CD14-positive monocyte (primary cell): ENCODE measurements at regions of chr19 and their contacts with region 1.

Region 1: GRCh38 chr19:17859533-17860330 is at the start of gene RPL18A:
- DNase-seq: peak; percentile 99 to 100 (median 99)
- H3K4me3 ChIP-seq: peak within 1 kb of the TSS; percentile 93 to 99 (median 98)
- H3K4me3 Mint-ChIP-seq: peak within 1 kb of the TSS; percentile 97 to 99
- H3K27ac ChIP-seq: peak within 1 kb of the TSS; percentile 38 to 80
- H3K27ac Mint-ChIP-seq: peak within 1 kb of the TSS; percentile 69 to 93 (median 89)
- H3K4me1 ChIP-seq: peaks cover 17 to 21% of the 10 kb centered on the region in 2 donors
- H3K4me1 Mint-ChIP-seq: peaks cover 28% of the 10 kb centered on the region
- H3K27me3 ChIP-seq: no peaks in the 10 kb centered on the region
- H3K27me3 Mint-ChIP-seq: peaks cover 0 to 7% (median 2%) of the 10 kb centered on the region in 3 donors
- CTCF ChIP-seq: peak; percentile 76
- polyA plus RNA-seq, gene RPL18A: 1,189 to 1,285 (median 1,268) TPM

Region 2: DNA sequence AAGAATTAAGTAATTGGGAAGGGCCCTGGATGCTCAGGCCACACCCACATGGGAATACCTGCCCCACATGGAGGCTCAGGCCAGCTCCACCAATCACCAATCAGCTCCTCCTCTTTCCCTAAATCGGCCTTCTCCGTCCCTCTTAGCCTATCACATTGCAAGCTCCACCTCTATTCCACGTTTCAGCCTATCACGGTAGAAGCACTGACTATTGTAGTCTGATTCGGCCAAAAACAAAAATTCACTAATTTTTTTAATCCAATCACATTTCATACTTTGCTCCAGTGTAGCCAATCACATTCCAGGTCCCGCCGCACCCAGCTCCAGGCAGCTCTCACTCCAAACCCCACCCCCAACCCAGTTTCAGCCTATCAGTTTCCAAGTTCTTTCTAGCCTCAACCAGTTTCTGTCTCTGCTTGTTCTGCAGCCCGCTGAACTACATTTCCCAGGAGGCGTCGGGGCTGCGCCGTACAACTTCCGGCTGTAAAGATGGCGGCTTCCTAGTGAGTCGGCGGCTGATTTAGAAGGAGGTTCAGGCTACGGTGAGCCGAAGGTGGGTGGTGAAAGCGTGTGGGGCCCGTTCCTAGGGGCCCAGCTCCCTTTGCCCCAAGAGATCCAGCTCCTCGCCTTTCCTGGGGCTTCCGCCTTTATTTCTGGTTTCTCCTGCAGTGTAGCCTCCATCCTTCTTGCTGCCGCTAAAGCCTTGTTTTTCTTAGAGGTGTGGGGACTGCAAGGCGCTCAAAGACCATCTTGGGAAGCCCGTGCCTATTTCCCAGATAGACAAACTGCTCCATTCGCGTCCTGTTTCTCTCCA is 592.5 kb before region 1 on chr19 and contains the start of gene BABAM1:
- intact Hi-C with region 1: loop called in 1 of 2 experiments (anchors 10 kb)
- DNase-seq: peak; percentile 97 to 99 (median 98)
- H3K4me3 ChIP-seq: peak within 1 kb of the TSS; percentile 89 to 98 (median 97)
- H3K4me3 Mint-ChIP-seq: peak within 1 kb of the TSS; percentile 87 to 90
- H3K27ac ChIP-seq: peak within 1 kb of the TSS; percentile 64 to 86
- H3K27ac Mint-ChIP-seq: peak within 1 kb of the TSS; percentile 82 to 93 (median 88)
- H3K4me1 ChIP-seq: peaks cover 16 to 17% of the 10 kb centered on the region in 2 donors
- H3K4me1 Mint-ChIP-seq: peaks cover 22% of the 10 kb centered on the region
- H3K27me3 ChIP-seq: no peaks in the 10 kb centered on the region
- H3K27me3 Mint-ChIP-seq: peaks cover 0 to 5% (median 2%) of the 10 kb centered on the region in 3 donors
- CTCF ChIP-seq: no peak
- polyA plus RNA-seq, gene BABAM1: 76.9 to 106 (median 90.3) TPM

Region 3: GRCh38 chr19:17450264-17451075 is 409.3 kb before region 1 on chr19:
- intact Hi-C with region 1: loop called in 1 of 2 experiments (anchors 5 kb)
- DNase-seq: peak in 1 of 3 donors; percentile 28
- H3K4me3 ChIP-seq: peak overlapping the region in 1 of 3 experiments; percentile 14
- H3K4me3 Mint-ChIP-seq: peak overlapping the region in 1 of 2 donors; percentile 39
- H3K27ac ChIP-seq: no peak overlapping the region
- H3K27ac Mint-ChIP-seq: peak overlapping the region in 2 of 7 donors; percentile 5 to 11
- H3K4me1 ChIP-seq: peaks cover 20 to 25% of the 10 kb centered on the region in 2 donors
- H3K4me1 Mint-ChIP-seq: peaks cover 25% of the 10 kb centered on the region
- H3K27me3 ChIP-seq: peaks cover 16 to 48% of the 10 kb centered on the region in 2 donors
- H3K27me3 Mint-ChIP-seq: peaks cover 40 to 51% (median 47%) of the 10 kb centered on the region in 3 donors
- CTCF ChIP-seq: no peak

Region 4: GRCh38 chr19:17703824-17704463 is 155.8 kb before region 1 on chr19:
- intact Hi-C with region 1: loop called (anchors 1 to 5 kb)
- DNase-seq: peak; percentile 50 to 72 (median 68)
- H3K4me3 ChIP-seq: no peak overlapping the region
- H3K4me3 Mint-ChIP-seq: no peak overlapping the region
- H3K27ac ChIP-seq: no peak overlapping the region
- H3K27ac Mint-ChIP-seq: no peak overlapping the region
- H3K4me1 ChIP-seq: no peaks in the 10 kb centered on the region
- H3K4me1 Mint-ChIP-seq: peaks cover 8% of the 10 kb centered on the region
- H3K27me3 ChIP-seq: no peaks in the 10 kb centered on the region
- H3K27me3 Mint-ChIP-seq: peaks cover 8 to 16% (median 11%) of the 10 kb centered on the region in 3 donors
- CTCF ChIP-seq: peak; percentile 95

Region 5: GRCh38 chr19:17775245-17775916 is 84.4 kb before region 1 on chr19:
- intact Hi-C with region 1: loop called in 1 of 2 experiments (anchors 2 kb)
- DNase-seq: peak in 1 of 3 donors; percentile 40
- H3K4me3 ChIP-seq: no peak overlapping the region
- H3K4me3 Mint-ChIP-seq: no peak overlapping the region
- H3K27ac ChIP-seq: no peak overlapping the region
- H3K27ac Mint-ChIP-seq: peak overlapping the region in 3 of 7 donors; percentile 15 to 54 (median 52)
- H3K4me1 ChIP-seq: peaks cover 14 to 23% of the 10 kb centered on the region in 2 donors
- H3K4me1 Mint-ChIP-seq: peaks cover 23% of the 10 kb centered on the region
- H3K27me3 ChIP-seq: no peaks in the 10 kb centered on the region
- H3K27me3 Mint-ChIP-seq: peaks cover 0 to 2% (median 0%) of the 10 kb centered on the region in 3 donors
- CTCF ChIP-seq: peak; percentile 76

Region 6: DNA sequence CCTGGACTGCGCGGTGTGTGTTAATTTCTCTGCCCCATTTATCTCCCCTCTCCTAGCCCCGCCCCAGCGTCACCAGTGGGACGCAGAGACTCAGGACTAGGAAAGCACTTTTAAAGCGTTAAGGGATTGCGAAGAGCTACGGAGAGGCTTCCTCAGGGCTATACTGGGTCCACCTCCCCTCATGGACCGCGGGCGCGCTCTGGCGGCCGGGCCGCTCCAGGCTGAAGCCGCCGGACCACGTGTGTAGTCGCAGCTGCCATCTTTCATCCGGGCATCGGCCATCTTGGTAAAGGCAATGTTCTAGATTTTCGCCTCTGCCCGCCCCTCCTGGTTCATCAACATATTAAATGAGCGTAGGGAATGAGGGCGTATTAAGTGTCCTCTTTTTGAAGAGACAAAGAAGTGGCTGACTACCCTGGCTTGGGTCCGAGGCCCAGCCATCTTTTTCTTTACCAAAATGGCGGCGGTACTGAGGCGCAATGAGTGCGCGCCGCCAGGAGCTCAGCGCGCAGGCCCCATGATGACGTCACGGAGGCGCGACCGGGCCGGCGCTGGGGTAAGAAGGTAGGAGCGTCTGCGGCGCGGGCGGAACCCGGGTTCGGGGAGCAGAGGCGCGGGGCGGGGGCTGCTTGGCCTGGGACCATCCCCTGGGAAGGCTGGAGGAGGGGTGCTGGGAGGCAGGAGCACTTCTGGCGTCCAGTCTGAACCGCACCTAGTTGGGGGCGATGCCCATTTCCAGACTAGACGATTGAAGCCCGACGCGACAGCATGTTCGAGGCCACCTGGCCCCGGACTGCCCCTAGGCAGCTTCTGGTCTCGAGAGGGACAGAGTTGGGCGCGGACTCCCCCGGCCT is 73.0 kb after region 1 on chr19 and contains the start of gene CCDC124:
- intact Hi-C with region 1: loop called (anchors 1 to 2 kb)
- DNase-seq: peak; percentile 91 to 93 (median 92)
- H3K4me3 ChIP-seq: peak within 1 kb of the TSS; percentile 49 to 78 (median 72)
- H3K4me3 Mint-ChIP-seq: peak within 1 kb of the TSS; percentile 82 to 95
- H3K27ac ChIP-seq: peak within 1 kb of the TSS; percentile 57 to 96
- H3K27ac Mint-ChIP-seq: peak within 1 kb of the TSS; percentile 92 to 99 (median 97)
- H3K4me1 ChIP-seq: peaks cover 15 to 21% of the 10 kb centered on the region in 2 donors
- H3K4me1 Mint-ChIP-seq: peaks cover 20% of the 10 kb centered on the region
- H3K27me3 ChIP-seq: peaks cover 0 to 6% of the 10 kb centered on the region in 2 donors
- H3K27me3 Mint-ChIP-seq: peaks cover 8 to 11% (median 10%) of the 10 kb centered on the region in 3 donors
- CTCF ChIP-seq: peak; percentile 82
- polyA plus RNA-seq, gene CCDC124: 29.7 to 66.3 (median 29.7) TPM

Region 7: DNA sequence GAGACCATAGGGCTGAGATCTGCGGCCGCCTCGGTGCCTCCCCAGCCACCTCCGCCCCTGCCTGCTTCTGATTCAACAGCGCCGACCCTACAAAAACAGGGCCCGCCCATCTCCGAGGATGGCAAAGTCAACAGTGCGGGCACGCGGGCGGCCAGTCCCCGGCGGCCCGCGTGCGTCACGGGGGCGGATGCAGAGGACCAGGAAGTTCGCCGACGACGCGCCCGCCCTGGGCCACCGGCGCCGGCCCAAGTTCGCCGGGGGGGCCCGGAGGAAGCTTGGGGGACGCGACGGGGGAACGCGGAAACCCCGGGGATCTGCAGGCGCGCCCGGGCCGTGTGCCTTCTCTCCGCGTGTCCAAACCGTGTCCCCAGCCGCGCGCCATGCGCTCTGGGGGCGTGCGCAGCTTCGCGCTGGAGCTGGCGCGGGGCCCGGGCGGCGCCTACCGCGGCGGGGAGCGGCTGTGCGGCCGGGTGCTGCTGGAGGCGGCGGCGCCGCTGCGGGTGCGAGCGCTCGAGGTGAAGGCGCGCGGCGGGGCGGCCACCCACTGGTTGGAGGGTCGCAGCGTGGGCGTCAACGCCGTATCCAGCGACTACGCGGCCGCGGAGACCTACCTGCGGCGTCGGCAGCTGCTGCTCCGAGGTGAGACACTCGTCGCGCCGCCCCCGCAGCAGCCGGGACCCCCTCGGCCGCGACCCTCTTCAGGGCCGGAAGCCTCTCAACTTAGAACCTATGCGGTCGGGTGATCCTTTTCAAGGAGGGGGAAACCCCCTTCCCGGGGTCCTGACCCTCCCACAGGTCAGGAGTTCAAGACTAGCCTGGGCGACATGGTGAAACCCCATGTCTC is 141.4 kb after region 1 on chr19:
- intact Hi-C with region 1: loop called (anchors 5 kb)
- DNase-seq: peak; percentile 94 to 95 (median 94)
- H3K4me3 ChIP-seq: peak overlapping the region; percentile 83 to 87 (median 85)
- H3K4me3 Mint-ChIP-seq: peak overlapping the region; percentile 90 to 92
- H3K27ac ChIP-seq: peak overlapping the region; percentile 80 to 85
- H3K27ac Mint-ChIP-seq: peak overlapping the region; percentile 95 to 98 (median 96)
- H3K4me1 ChIP-seq: peaks cover 27 to 41% of the 10 kb centered on the region in 2 donors
- H3K4me1 Mint-ChIP-seq: peaks cover 29% of the 10 kb centered on the region
- H3K27me3 ChIP-seq: no peaks in the 10 kb centered on the region
- H3K27me3 Mint-ChIP-seq: peaks cover 0 to 4% (median 0%) of the 10 kb centered on the region in 3 donors
- CTCF ChIP-seq: no peak